ENCODE measurements at regions of chr1 and their contacts with region 1.

Region 1: GRCh38 chr1:154870115-154870571 is at the start of gene KCNN3:
- DNase-seq: peak; percentile 88 to 99 (median 93)

Region 2: GRCh38 chr1:154479764-154480421 is 390.2 kb before region 1 on chr1:
- intact Hi-C with region 1: loop called (anchors 10 kb)
- DNase-seq: peak in 5 of 10 donors; percentile 61 to 84 (median 62)

Region 3: DNA sequence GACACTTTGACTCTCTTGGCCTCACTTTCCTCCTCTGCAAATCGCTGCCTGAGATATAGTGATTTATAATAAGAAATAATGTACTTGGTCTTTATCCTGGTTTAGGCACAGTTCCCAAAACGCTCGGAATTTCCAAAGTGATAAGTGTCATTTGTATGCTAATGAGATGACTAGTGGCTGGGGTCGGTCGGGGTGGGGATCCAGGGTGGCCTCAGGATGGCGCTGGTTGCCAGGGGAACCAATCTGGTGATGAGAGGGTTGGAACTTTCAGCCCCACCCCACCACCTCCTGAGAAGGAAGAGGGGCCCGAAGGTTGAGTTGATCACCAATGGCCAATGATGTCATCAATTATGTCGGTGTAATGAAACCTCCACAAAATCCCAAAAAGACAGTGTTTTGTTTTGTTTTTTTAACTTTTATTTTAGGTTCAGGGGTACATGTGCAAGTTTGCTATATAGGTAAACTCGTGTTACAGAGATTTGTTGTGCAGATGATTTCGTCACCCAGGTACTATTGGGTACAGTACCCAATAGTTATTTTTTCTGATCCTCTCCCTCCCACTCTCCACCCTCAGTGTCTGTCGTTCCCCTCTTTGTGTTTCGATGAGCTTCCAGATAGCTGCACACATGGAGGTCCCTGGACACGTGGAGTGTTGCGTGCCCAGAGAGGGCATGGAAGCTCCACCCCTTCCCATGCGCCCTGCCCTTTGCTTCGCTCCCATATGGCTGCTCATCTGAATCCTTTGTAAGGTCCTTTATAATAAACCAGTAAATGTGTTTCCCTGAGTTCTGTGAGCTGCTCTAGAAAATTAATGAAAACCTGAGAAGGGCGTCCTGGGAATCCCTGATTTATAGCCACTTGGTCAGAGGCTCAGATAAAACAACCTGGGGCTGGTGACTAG is 97.3 kb before region 1 on chr1:
- intact Hi-C with region 1: loop called (anchors 5 kb)
- DNase-seq: no peak